ENCODE measurements at regions of chr4 and their contacts with region 1.

Region 1: GRCh38 chr4:154686838-154687237 is 57.0 kb upstream of the LRAT start:
- H3K4me3 ChIP-seq: no peak overlapping the region
- H3K27ac ChIP-seq: no peak overlapping the region
- H3K4me1 ChIP-seq: no peaks in the 10 kb centered on the region
- CTCF ChIP-seq: no peak

Region 2: DNA sequence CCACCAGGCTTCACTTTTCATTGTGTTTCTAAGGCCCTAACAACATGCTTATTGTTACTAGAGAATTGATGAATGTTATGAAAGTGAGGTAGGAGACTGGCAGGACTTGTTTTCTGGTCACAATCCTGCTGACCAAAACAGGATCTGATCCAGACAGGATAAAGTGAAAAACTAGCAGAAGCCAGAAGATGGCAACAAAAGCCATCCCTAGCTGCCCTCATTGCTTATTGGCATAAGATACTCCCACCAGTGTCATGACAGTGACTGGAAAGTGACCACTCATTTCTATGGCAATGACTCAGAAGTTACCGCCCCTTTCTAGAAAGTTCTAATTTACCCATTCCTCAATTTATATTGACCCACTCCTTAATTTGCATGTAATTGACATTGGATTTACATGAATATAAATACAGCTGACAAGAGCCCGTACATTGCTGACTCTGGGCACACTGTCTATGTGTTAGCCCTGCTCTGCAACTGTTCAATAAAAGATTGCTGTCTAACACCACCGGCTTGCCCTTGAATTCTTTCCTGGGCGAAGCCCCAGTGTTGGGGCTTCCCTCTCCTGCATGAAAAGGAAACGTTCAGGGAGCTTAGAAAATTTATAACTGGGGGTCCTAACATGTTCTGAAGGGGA is 44.3 kb before region 1 on chr4:
- CTCF ChIA-PET with region 1: interaction called, 10 read pairs
- POLR2A ChIA-PET with region 1: no interaction called
- H3K4me3 ChIP-seq: no peak overlapping the region
- H3K27ac ChIP-seq: no peak overlapping the region
- H3K4me1 ChIP-seq: no peaks in the 10 kb centered on the region
- CTCF ChIP-seq: no peak

Region 3: DNA sequence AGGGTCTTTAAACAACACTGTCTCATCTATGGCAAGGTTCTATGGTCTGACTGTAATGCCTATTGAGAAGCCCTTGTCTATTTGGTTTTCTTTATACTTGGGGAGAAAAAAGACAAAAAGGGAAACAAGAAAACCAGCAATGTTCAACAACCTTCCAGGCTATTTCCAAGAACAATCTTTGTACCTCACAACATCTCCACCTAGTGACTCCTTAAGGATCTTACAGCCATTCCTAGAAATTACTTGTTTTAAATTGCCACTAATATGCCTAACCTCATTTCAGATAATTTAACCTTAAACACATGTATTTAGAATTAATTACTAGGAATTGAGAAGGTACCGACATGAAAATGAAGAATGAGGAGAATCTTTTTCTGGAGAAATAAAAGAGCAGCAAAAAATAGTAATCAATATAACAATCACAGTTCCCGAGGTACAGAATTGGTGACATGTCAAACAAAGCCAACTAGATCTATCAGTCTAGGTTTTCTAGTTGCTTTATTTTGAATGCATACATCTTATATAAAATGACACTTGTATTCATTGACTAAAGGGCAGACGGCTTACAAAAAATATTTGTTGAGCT is 92.6 kb after region 1 on chr4:
- CTCF ChIA-PET with region 1: interaction called, 14 read pairs
- POLR2A ChIA-PET with region 1: no interaction called
- H3K4me3 ChIP-seq: no peak overlapping the region
- H3K27ac ChIP-seq: no peak overlapping the region
- H3K4me1 ChIP-seq: no peaks in the 10 kb centered on the region
- CTCF ChIP-seq: no peak

Measured in HEK293 (cell line).